WTC11 (cell line): ENCODE measurements at regions of chr2 and their contacts with region 1.

Region 1: DNA sequence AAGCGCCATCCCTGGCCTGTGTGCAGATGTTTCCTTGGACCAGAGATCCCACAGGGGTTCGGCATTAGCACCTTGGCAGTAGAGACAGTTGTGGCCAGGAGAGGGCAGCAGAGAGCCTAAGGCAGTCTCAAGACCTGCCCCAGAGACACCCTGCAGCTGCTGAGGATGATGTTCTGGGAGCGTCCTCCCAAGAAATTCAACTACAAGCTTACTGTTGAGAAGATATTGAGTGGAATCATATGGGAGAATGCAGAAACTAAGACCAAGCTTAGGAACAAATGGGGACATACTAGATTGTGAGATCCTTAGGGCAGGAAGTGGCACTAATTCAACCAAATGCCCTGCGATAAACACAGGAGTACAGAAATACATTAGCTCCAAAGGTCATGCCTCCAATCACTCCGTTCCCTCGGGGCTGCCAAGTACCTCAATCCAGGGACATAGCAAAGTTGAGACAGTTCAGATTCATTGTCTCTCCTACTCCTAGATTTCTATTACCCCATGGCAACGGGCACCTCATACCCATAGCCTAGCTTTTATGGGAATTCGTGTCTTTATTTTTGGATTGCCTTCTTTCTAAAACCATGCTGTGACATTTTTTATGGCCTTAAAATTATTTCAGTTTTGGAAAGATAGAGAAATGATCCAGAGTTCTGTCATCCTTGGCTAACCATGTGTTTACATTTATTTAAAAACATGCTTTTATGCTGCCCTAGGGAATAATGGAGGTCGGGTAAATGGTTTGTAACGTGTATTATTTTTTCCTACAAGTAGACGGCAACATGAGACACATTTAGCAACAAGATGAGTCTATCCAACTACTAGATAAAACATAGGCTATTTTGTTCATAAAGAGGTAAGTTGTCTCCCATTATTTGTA is 2.2 kb upstream of the ERMN start:
- DNase-seq: peak; percentile 91
- ATAC-seq: peak; percentile 96
- H3K4me3 Mint-ChIP-seq: no peak overlapping the region
- H3K27ac Mint-ChIP-seq: no peak overlapping the region
- H3K4me1 Mint-ChIP-seq: peaks cover 23% of the 10 kb centered on the region
- H3K27me3 Mint-ChIP-seq: no peaks in the 10 kb centered on the region
- CTCF ChIP-seq: peak; percentile 80

Region 2: DNA sequence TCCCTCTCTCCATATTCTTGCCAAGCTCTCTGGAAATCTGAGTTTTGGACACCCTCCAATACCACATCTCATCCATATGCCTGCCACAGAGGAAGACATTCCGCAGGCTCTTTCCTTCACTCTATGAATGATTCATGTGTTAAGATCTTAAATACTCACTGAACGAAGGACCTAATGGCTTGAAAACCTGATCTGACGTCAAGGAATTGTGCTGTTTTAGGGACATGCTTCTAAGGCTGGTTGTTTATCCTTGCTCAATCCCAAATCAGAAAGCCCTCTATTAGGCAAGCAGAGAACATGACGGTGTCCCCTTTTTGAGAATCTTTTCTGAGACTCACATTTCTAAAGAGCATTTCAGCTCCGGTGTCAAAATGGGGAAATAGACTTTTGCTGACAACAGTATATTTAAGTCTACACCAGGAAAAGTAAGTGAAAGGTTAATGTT is 154.1 kb before region 1 on chr2:
- CTCF ChIA-PET with region 1: no interaction called
- POLR2A ChIA-PET with region 1: no interaction called
- DNase-seq: no peak
- ATAC-seq: no peak; the same call in 1 of the 2 replicates
- H3K4me3 Mint-ChIP-seq: no peak overlapping the region
- H3K27ac Mint-ChIP-seq: no peak overlapping the region
- H3K4me1 Mint-ChIP-seq: no peaks in the 10 kb centered on the region
- H3K27me3 Mint-ChIP-seq: no peaks in the 10 kb centered on the region
- CTCF ChIP-seq: no peak

Region 3: GRCh38 chr2:157296490-157297357 is 31.1 kb before region 1 on chr2:
- CTCF ChIA-PET with region 1: interaction called, 117 read pairs
- POLR2A ChIA-PET with region 1: no interaction called
- DNase-seq: no peak
- ATAC-seq: peak; percentile 58
- H3K4me3 Mint-ChIP-seq: no peak overlapping the region
- H3K27ac Mint-ChIP-seq: no peak overlapping the region
- H3K4me1 Mint-ChIP-seq: peaks cover 12% of the 10 kb centered on the region
- H3K27me3 Mint-ChIP-seq: peaks cover 4% of the 10 kb centered on the region
- CTCF ChIP-seq: no peak

Region 4: GRCh38 chr2:157302492-157303099 is 25.3 kb before region 1 on chr2:
- CTCF ChIA-PET with region 1: interaction called, 117 read pairs
- POLR2A ChIA-PET with region 1: interaction called, 3 read pairs
- DNase-seq: no peak
- ATAC-seq: peak; percentile 68
- H3K4me3 Mint-ChIP-seq: no peak overlapping the region
- H3K27ac Mint-ChIP-seq: no peak overlapping the region
- H3K4me1 Mint-ChIP-seq: peaks cover 26% of the 10 kb centered on the region
- H3K27me3 Mint-ChIP-seq: peaks cover 4% of the 10 kb centered on the region
- CTCF ChIP-seq: peak; percentile 71

Region 5: GRCh38 chr2:157311706-157312105 is 16.2 kb before region 1 on chr2:
- CTCF ChIA-PET with region 1: interaction called, 26 read pairs
- POLR2A ChIA-PET with region 1: no interaction called
- DNase-seq: no peak
- ATAC-seq: no peak
- H3K4me3 Mint-ChIP-seq: no peak overlapping the region
- H3K27ac Mint-ChIP-seq: no peak overlapping the region
- H3K4me1 Mint-ChIP-seq: peaks cover 35% of the 10 kb centered on the region
- H3K27me3 Mint-ChIP-seq: no peaks in the 10 kb centered on the region
- CTCF ChIP-seq: no peak

Region 6: DNA sequence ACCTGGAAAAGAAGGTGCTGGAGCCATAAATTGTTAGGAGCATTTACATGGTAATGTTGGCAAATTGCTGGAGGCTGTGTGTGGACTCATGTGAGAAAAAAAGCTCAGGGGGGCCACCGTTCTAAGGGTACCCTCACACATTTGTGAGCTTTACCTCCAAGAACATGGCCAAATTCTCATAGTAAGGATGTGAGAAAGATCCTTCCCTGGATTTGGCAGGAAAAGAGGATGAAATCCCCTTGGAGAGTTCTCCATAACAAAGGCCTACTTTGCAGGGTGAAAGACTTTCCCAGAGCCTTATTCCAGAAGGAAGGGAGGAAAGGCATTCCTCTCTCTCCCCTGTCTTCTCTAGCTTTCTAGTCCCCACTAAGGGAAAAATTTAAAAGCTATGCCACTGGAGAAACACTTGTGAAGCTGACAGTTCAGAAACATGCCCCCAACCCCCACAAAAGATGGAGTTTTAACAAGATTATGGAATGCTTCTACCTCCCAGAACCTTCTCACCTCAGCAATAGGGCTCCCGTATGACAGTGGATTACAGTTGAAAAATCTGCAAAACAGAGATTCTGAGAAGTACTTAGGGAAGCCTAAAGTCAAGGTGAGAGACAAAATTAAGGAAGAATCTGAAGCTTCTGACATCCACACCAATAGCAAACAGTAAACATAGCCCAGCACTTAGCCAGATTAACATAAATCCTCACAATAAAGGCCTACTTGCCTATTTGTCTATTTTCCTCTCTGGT is 18.0 kb after region 1 on chr2:
- CTCF ChIA-PET with region 1: interaction called, 19 read pairs
- POLR2A ChIA-PET with region 1: no interaction called
- DNase-seq: no peak
- ATAC-seq: peak; percentile 98
- H3K4me3 Mint-ChIP-seq: peak overlapping the region; percentile 1; the same call in 1 of the 2 replicates
- H3K27ac Mint-ChIP-seq: peak overlapping the region; percentile 87
- H3K4me1 Mint-ChIP-seq: peaks cover 18% of the 10 kb centered on the region
- H3K27me3 Mint-ChIP-seq: peaks cover 10% of the 10 kb centered on the region; the same call in 1 of the 2 replicates
- CTCF ChIP-seq: no peak

Region 7: GRCh38 chr2:157492189-157492773 is 164.4 kb after region 1 on chr2:
- CTCF ChIA-PET with region 1: interaction called, 15 read pairs
- POLR2A ChIA-PET with region 1: no interaction called
- DNase-seq: peak; percentile 74
- ATAC-seq: peak; percentile 94
- H3K4me3 Mint-ChIP-seq: no peak overlapping the region
- H3K27ac Mint-ChIP-seq: no peak overlapping the region
- H3K4me1 Mint-ChIP-seq: 0 out of 2 replicates have a peak, but pooled peaks cover 4% of the 10 kb centered on the region
- H3K27me3 Mint-ChIP-seq: no peaks in the 10 kb centered on the region
- CTCF ChIP-seq: peak; percentile 62; the same call in 1 of the 2 replicates